ENCODE measurements at regions of chr18 and their contacts with region 1.

Region 1: DNA sequence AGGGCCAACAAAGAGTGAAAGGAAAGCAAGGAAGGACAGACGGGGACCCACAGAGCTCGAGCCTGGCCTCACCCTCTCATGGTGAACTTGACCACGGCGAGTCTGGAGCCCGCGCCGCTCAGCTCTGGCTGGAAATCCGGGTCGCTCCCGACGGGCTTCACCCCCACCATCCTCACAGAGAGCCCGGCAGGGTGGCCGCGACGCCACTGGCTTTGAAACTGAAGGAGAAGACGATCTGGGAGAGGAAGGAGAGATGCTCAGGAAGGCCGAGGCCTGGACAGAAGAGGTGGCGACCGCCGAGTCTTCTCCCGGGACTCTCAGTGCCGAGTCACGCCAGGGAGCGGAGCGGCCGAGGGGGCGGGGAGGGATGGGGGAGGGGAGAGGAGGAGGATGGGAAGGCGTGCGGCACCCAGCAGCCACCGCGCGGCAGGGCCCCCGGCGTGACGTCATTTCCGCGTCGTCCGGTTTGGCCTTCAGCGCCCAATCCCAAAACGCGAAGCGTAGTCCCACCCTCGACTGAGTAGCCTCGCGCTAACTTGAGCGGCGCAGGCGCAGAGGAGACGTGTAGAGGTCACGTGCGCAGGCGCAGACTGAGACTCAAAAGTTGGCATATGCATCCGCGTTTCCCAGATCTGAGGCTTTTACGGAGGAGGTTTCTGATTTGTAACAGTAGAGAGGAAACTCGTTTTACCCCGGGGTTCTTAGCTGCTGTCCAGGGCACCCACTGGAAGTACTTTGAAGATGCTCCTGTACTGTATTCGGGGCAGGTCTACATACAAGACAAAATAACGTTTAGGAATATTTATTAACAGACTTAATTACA is at the start of gene TXNL1:
- DNase-seq: peak; percentile 98
- H3K4me3 Mint-ChIP-seq: peak within 1 kb of the TSS; percentile 99
- H3K27ac Mint-ChIP-seq: peak within 1 kb of the TSS; percentile 97
- H3K4me1 Mint-ChIP-seq: peaks cover 55% of the 10 kb centered on the region
- H3K27me3 Mint-ChIP-seq: no peaks in the 10 kb centered on the region
- total RNA-seq, gene TXNL1: 94.2 and 100 TPM in 2 replicates

Region 2: GRCh38 chr18:56661360-56662062 is 23.0 kb after region 1 on chr18:
- intact Hi-C with region 1: no loop called
- DNase-seq: no peak
- H3K4me3 Mint-ChIP-seq: no peak overlapping the region
- H3K27ac Mint-ChIP-seq: no peak overlapping the region
- H3K4me1 Mint-ChIP-seq: peaks cover 21% of the 10 kb centered on the region
- H3K27me3 Mint-ChIP-seq: no peaks in the 10 kb centered on the region

Region 3: GRCh38 chr18:57621246-57621604 is 982.7 kb after region 1 on chr18:
- intact Hi-C with region 1: loop called (anchors 2 kb)
- DNase-seq: no peak
- H3K4me3 Mint-ChIP-seq: peak overlapping the region; percentile 85
- H3K27ac Mint-ChIP-seq: peak overlapping the region; percentile 87
- H3K4me1 Mint-ChIP-seq: peaks cover 9% of the 10 kb centered on the region
- H3K27me3 Mint-ChIP-seq: no peaks in the 10 kb centered on the region

Measured in activated T-helper 1 cell treated with anti-CD3 and anti-CD28 coated beads, Interleukin-12 subunit alpha, Interleukin-12 subunit beta, Interleukin-2, Interleukin-4 antibody, amounts not matched to agents 30 ng/mL and 10 ng/mL and 1 ng/mL, durations not matched to agents 14 hours and 24 hours and 36 hours (primary cell).